ENCODE measurements at regions of chrX and their contacts with region 1.

Region 1: GRCh38 chrX:139971394-139971749 is 6.1 kb upstream of the CXorf66 start:
- DNase-seq: no peak
- ATAC-seq: no peak
- H3K4me3 ChIP-seq: no peak overlapping the region
- H3K4me3 Mint-ChIP-seq: no peak overlapping the region
- H3K27ac ChIP-seq: no peak overlapping the region
- H3K27ac Mint-ChIP-seq: no peak overlapping the region
- H3K4me1 ChIP-seq: no peaks in the 10 kb centered on the region
- H3K4me1 Mint-ChIP-seq: no peaks in the 10 kb centered on the region
- H3K27me3 ChIP-seq: no peaks in the 10 kb centered on the region
- H3K27me3 Mint-ChIP-seq: peaks cover 13 to 28% of the 10 kb centered on the region in 2 donors
- CTCF ChIP-seq: no peak

Region 2: DNA sequence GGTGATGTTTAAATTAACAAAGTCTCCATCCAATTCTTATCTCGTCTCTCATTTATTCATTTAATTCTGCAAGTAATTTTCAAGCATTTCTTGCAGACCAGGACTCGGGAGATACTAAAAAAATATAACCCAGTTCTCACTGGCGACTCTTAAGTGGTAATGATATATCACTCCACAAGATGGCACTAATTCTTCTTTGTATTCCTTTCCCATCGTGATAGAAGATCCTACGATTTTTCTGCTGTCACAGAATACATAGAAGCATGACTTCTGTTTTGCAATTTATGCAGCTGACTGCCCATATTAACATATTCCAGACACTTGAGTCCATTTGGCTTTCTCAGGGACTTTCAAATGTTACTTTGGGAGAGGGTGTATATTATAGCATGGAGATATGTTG is 1195.9 kb before region 1 on chrX:
- intact Hi-C with region 1: loop called (anchors 10 kb)
- DNase-seq: peak in 1 of 2 donors; percentile 1
- ATAC-seq: peak in 1 of 3 donors; percentile 38
- H3K4me3 ChIP-seq: no peak overlapping the region
- H3K4me3 Mint-ChIP-seq: no peak overlapping the region
- H3K27ac ChIP-seq: no peak overlapping the region
- H3K27ac Mint-ChIP-seq: no peak overlapping the region
- H3K4me1 ChIP-seq: no peaks in the 10 kb centered on the region
- H3K4me1 Mint-ChIP-seq: peaks cover 0 to 4% of the 10 kb centered on the region in 2 donors
- H3K27me3 ChIP-seq: no peaks in the 10 kb centered on the region
- H3K27me3 Mint-ChIP-seq: peaks cover 0 to 8% of the 10 kb centered on the region in 2 donors
- CTCF ChIP-seq: no peak